Activated naive CD4-positive, alpha-beta T cell treated with anti-CD3 and anti-CD28 coated beads for 36 hours (primary cell): ENCODE measurements at regions of chr13 and their contacts with region 1.

Region 1: DNA sequence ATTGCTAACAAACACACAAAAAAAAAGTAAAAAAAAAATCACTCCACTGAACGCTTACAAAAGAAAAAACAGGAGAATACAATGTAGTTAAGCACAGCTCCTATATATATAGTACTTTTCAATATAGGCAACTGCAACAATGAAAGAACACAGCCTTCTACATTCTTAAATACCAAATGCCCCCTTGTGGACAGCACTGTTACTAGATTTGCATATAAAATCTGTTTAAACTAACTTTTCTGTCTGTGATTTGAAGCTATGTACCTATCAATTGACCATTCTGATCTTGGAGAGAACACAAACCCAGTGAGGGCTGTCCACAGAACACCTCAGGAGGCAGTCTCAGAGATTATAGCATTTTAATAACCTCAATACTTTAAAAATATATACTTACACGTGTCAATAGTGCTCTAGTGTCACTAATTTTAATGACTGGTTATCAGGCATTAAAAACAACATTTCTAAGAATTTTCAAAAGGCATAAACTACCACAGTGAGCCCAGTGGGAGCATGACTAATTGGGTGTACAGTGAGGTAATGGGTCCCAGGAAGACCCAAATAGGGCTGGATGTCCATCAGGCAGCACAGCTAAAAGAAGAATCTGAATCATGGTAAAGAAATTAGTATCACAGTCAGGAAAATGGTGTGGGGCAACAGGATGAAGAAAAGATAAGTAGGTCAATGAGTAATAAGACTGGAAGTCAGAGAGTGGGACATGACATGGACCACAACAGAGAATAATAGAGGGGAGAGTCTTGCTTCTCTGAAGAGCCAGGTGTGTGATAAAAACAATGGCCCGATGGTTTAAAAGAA is 22.2 kb downstream of the CCDC169 start:
- DNase-seq: peak; percentile 28
- H3K4me3 Mint-ChIP-seq: no peak overlapping the region
- H3K27ac Mint-ChIP-seq: no peak overlapping the region
- H3K4me1 Mint-ChIP-seq: no peaks in the 10 kb centered on the region
- H3K27me3 Mint-ChIP-seq: peaks cover 5% of the 10 kb centered on the region

Region 2: DNA sequence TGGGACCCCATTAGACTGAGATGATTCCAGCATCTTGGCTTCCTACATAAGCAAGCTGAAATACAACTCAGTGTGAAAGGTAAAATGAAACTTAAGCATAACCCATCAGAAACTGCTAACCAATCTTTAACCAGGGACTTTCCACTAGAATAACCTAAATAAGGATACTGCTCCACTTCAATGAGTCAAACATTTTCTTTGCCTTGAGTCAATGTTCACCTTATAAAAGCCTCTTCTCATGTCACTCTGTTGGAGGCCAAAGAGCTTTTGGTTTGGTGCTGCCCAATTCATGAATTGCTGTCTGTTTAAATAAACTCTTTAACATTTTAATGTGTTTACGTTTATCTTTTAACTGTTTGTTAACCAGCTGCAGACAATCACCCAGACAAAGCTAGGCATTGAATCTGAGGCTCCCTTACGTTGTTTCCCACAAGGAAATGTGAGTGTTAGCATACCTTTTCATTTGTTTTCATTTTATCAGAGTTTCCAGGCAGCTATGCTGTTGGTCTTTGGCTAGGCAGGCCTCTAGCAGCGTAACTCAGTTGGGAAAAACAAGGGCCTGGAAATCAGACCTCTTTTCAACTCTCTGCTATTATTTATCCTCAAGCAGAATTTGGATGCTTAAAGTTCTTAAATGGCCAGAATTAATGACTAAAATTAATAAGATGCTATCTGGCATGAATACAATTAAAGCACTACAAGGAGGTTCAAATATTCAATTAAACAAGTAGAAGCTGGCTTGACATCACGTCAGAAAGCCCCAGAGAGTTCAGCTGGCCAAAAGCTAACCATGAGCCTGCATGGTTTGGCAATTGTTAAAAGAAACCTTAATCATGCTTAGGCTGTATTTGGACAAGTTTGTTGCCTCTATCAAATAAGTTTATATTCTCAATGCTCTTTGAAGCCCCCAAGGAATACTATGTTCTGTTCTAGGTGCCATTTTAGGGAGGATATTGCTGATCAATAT is 344.4 kb before region 1 on chr13:
- CTCF ChIA-PET with region 1: no interaction called
- intact Hi-C with region 1: no loop called
- DNase-seq: no peak
- H3K4me3 Mint-ChIP-seq: no peak overlapping the region
- H3K27ac Mint-ChIP-seq: no peak overlapping the region
- H3K4me1 Mint-ChIP-seq: no peaks in the 10 kb centered on the region
- H3K27me3 Mint-ChIP-seq: peaks cover 2% of the 10 kb centered on the region

Region 3: DNA sequence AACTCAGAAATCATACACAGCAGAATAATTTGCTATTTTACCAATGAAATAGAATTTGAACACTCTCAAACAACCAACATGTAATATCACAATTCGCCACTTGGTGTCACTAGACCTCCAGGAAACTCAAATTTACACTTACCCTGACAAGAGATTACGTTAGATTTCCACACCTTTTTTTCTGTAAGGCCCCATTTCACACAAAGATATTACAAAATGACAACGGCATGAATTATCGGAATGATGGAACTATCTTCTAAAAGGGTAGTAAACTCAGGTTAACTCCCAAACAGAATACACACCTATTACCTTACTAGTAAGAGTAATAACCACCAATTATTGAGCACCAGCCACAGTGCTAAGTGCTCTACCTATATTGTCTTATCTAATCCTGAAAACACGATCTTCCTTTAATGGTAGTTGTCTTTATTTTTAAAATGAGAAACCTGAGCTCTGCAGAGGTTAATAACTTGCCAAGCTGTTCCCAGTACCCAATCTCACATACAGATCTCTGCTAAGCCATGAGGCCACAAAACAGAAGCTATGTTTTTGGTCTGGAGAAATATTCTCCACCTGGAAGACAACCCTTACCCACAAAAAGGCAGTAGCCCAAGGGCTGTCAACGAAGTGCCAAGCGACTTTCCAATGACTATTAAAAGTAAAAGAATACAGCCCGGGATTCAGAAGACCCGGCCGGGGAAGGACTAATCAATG is 296.6 kb before region 1 on chr13:
- CTCF ChIA-PET with region 1: interaction called, 48 read pairs
- intact Hi-C with region 1: loop called (anchors 1 kb)
- DNase-seq: peak; percentile 51
- H3K4me3 Mint-ChIP-seq: no peak overlapping the region
- H3K27ac Mint-ChIP-seq: no peak overlapping the region
- H3K4me1 Mint-ChIP-seq: no peaks in the 10 kb centered on the region
- H3K27me3 Mint-ChIP-seq: peaks cover 3% of the 10 kb centered on the region

Region 4: DNA sequence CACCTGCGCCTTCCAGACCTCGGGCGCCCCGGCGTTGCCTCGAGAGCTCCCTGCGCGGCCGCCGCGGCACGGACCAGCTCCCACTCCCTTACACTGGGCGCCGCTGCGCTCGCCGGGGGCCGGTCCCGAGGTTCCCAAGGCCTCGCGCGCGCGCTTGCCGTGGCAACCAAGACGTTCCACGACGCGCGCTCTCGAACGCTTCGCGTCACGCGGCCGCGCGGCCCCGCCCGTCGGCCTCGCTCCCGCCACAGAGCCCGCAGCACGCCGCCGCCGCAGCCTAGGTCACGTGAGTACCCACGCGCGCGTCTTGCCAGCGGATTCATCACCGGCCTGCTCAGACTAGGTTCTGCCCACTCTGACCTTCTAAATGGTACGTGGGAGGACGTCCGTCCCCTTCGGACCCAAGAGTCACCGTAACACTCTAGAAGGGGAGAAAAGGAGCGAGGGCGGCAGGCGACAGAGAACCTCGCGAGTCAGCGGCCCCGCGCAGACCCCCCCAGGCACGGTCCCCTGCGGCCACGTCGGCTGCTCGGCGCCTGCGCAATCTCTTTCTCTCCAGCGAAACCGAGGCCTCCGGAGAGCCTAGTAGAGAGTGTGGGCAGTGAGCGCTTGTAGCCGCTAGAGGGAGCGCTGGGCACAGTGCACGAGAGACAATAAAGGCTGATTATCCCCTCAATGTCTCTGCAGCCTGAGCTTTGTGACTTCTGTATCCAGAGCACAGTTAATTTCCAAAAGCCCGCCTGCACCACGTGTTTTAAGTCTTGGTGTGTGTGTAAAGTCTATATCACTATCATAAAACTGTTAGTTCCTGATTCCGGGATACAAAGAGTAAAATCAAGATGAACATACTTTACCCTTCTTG is 71.1 kb after region 1 on chr13 and contains the start of gene SPART:
- CTCF ChIA-PET with region 1: no interaction called
- intact Hi-C with region 1: no loop called
- DNase-seq: peak; percentile 93
- H3K4me3 Mint-ChIP-seq: peak within 1 kb of the TSS; percentile 86
- H3K27ac Mint-ChIP-seq: peak within 1 kb of the TSS; percentile 90
- H3K4me1 Mint-ChIP-seq: peaks cover 26% of the 10 kb centered on the region
- H3K27me3 Mint-ChIP-seq: no peaks in the 10 kb centered on the region
- total RNA-seq, gene SPART: 12.5 to 17.0 TPM

Region 5: GRCh38 chr13:36369268-36370107 is 94.1 kb after region 1 on chr13:
- CTCF ChIA-PET with region 1: no interaction called
- intact Hi-C with region 1: no loop called
- DNase-seq: no peak
- H3K4me3 Mint-ChIP-seq: no peak overlapping the region
- H3K27ac Mint-ChIP-seq: no peak overlapping the region
- H3K4me1 Mint-ChIP-seq: no peaks in the 10 kb centered on the region
- H3K27me3 Mint-ChIP-seq: peaks cover 3% of the 10 kb centered on the region